WTC11 (cell line): ENCODE measurements at regions of chr7 and their contacts with region 1.

Region 1: DNA sequence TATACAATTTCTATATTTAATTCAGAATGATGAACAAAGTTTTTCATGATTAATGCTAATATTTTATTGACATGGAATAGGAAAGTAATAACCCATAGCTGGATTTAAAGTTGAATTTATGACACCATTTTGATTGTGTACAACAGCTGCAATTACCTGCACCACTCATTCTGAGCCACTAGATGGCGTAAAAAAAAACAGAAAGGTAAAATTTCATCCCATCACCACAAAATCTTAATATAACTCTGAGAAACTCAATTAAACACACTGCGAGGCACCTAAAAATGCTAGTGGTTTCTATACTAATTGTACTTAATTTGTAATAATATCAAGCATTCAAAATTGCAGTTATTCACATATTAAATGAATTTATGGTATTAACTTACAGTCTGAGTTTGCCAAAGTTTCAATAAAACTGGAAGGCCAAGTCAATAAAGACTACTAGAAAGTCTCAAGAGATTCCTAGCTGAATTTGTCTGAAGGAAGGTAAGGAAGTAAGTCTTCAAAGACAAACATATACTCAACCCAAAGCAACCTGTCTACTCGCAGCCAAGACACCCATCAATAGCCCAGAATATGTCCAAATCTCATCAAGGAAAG is 182.5 kb downstream of the SKAP2 start:
- DNase-seq: no peak
- ATAC-seq: no peak
- H3K4me3 Mint-ChIP-seq: no peak overlapping the region
- H3K27ac Mint-ChIP-seq: no peak overlapping the region
- H3K4me1 Mint-ChIP-seq: peaks cover 5% of the 10 kb centered on the region
- H3K27me3 Mint-ChIP-seq: no peaks in the 10 kb centered on the region; the same call in 1 of the 2 replicates
- CTCF ChIP-seq: peak; percentile 42; the same call in 1 of the 2 replicates

Region 2: DNA sequence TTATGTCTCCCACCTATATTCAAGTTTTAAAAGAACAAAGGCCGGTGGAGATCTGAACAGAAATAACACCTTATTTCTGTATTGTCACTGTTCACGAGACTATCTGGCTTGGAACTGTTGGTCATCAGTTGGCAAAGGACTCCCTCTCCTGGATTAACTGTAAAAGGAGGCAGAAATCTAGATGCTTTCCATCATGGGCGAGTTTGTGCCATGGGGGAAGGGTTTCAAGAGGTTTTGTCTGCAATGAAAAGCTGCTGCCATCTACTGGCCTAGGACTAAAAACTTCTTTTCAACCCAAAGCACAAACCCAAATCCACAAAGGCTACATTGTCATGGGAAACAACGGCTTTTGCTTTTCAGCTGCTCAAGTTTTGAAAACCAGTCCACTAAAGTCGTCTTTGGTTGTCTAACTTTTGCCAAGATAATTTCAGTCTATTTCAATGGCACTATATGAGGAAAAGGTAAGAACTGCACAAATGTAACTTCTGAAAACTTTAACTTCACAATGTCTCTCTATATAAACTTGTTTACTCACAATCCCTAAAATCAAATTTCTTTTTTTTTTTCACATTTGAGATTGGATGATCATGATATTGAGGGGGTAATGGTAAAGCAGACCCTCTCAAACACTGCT is 14.3 kb before region 1 on chr7:
- CTCF ChIA-PET with region 1: interaction called, 16 read pairs
- POLR2A ChIA-PET with region 1: no interaction called
- DNase-seq: peak; percentile 68
- ATAC-seq: peak; percentile 97
- H3K4me3 Mint-ChIP-seq: no peak overlapping the region
- H3K27ac Mint-ChIP-seq: no peak overlapping the region
- H3K4me1 Mint-ChIP-seq: peaks cover 14% of the 10 kb centered on the region
- H3K27me3 Mint-ChIP-seq: no peaks in the 10 kb centered on the region
- CTCF ChIP-seq: peak; percentile 43

Region 3: DNA sequence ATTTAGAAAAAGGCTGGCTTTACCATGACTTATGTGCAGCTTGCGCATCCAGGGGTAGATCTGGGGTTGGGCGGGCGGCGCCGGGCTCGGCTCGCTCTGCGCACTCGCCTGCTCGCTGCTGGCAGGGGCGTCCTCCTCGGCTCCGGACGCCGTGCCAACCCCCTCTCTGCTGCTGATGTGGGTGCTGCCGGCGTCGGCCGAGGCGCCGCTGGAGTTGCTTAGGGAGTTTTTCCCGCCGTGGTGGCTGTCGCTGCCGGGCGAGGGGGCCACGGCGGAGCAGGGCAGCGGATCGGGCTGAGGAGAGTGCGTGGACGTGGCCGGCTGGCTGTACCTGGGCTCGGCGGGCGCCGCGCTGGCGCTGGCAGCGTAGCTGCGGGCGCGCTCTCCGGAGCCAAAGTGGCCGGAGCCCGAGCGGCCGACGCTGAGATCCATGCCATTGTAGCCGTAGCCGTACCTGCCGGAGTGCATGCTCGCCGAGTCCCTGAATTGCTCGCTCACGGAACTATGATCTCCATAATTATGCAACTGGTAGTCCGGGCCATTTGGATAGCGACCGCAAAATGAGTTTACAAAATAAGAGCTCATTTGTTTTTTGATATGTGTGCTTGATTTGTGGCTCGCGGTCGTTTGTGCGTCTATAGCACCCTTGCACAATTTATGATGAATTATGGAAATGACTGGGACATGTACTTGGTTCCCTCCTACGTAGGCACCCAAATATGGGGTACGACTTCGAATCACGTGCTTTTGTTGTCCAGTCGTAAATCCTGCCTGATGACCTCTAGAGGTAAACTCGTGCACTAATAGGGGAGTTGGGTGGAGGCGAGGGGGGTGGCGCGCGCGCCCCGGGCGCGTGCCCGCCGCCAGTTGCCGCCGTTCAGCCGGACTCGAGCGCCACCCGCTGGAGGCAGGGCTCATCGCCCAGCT is 461.4 kb after region 1 on chr7 and contains the start of gene HOXA5:
- CTCF ChIA-PET with region 1: interaction called, 12 read pairs
- POLR2A ChIA-PET with region 1: no interaction called
- DNase-seq: peak; percentile 89
- ATAC-seq: peak; percentile 31
- H3K4me3 Mint-ChIP-seq: peak within 1 kb of the TSS; percentile 74
- H3K27ac Mint-ChIP-seq: no peak within 1 kb of the TSS
- H3K4me1 Mint-ChIP-seq: peaks cover 25% of the 10 kb centered on the region
- H3K27me3 Mint-ChIP-seq: peaks cover 100% of the 10 kb centered on the region
- CTCF ChIP-seq: peak; percentile 88
- total RNA-seq, gene HOXA5: 0.14 TPM in 1 of 3 replicates, not detected in the others